Ovary (tissue), 10 donors: ENCODE measurements at regions of chr10 and their contacts with region 1.

Region 1: GRCh38 chr10:15097011-15097812 is at the start of gene RPP38:
- DNase-seq: peak; percentile 97 to 99 (median 99)
- H3K4me3 ChIP-seq: peak within 1 kb of the TSS; percentile 72
- H3K27ac ChIP-seq: peak within 1 kb of the TSS; percentile 88 to 94
- H3K4me1 ChIP-seq: peaks cover 9% of the 10 kb centered on the region
- H3K27me3 ChIP-seq: no peaks in the 10 kb centered on the region
- CTCF ChIP-seq: no peak
- EP300 ChIP-seq: no peak
- POLR2A ChIP-seq: peak; percentile 43
- total RNA-seq, gene RPP38: 9.1 to 19.2 (median 11.9) TPM

Region 2: GRCh38 chr10:14837757-14838581 is 259.2 kb before region 1 on chr10 and contains the starts of genes CDNF, HSPA14 and MSANTD7:
- intact Hi-C with region 1: loop called in 1 of 4 experiments (anchors 10 kb)
- DNase-seq: peak; percentile 99 to 100 (median 99)
- H3K4me3 ChIP-seq: peak within 1 kb of the TSS; percentile 98
- H3K27ac ChIP-seq: peak within 1 kb of the TSS; percentile 87 to 92
- H3K4me1 ChIP-seq: no peaks in the 10 kb centered on the region
- H3K27me3 ChIP-seq: no peaks in the 10 kb centered on the region
- CTCF ChIP-seq: no peak
- EP300 ChIP-seq: no peak
- POLR2A ChIP-seq: peak; percentile 76
- total RNA-seq, gene CDNF: 1.5 to 6.0 (median 4.4) TPM
- total RNA-seq, gene HSPA14: 7.7 to 13.6 (median 10.6) TPM
- total RNA-seq, gene MSANTD7: 9.2 to 15.1 (median 9.9) TPM

Region 3: GRCh38 chr10:14904316-14904732 is 192.9 kb before region 1 on chr10:
- intact Hi-C with region 1: no loop called
- DNase-seq: no peak
- H3K4me3 ChIP-seq: no peak overlapping the region
- H3K27ac ChIP-seq: no peak overlapping the region
- H3K4me1 ChIP-seq: no peaks in the 10 kb centered on the region
- H3K27me3 ChIP-seq: no peaks in the 10 kb centered on the region
- CTCF ChIP-seq: peak in 1 of 3 donors; percentile 17
- EP300 ChIP-seq: no peak
- POLR2A ChIP-seq: no peak

Region 4: GRCh38 chr10:14959276-14960057 is 137.7 kb before region 1 on chr10 and contains the start of gene MEIG1:
- intact Hi-C with region 1: loop called in 1 of 4 experiments (anchors 10 kb)
- DNase-seq: peak; percentile 94 to 99 (median 95)
- H3K4me3 ChIP-seq: peak within 1 kb of the TSS; percentile 78
- H3K27ac ChIP-seq: peak within 1 kb of the TSS; percentile 62 to 89
- H3K4me1 ChIP-seq: no peaks in the 10 kb centered on the region
- H3K27me3 ChIP-seq: no peaks in the 10 kb centered on the region
- CTCF ChIP-seq: no peak
- EP300 ChIP-seq: no peak
- POLR2A ChIP-seq: peak; percentile 57
- total RNA-seq, gene MEIG1: 0.69 TPM in 1 of 7 donors, not detected in the others

Region 5: GRCh38 chr10:15168781-15169554 is 71.8 kb after region 1 on chr10:
- intact Hi-C with region 1: loop called in 1 of 4 experiments (anchors 10 kb)
- DNase-seq: peak; percentile 96 to 99 (median 97)
- H3K4me3 ChIP-seq: peak overlapping the region; percentile 5
- H3K27ac ChIP-seq: no peak overlapping the region
- H3K4me1 ChIP-seq: peaks cover 4% of the 10 kb centered on the region
- H3K27me3 ChIP-seq: no peaks in the 10 kb centered on the region
- CTCF ChIP-seq: no peak
- EP300 ChIP-seq: no peak
- POLR2A ChIP-seq: no peak

Region 6: DNA sequence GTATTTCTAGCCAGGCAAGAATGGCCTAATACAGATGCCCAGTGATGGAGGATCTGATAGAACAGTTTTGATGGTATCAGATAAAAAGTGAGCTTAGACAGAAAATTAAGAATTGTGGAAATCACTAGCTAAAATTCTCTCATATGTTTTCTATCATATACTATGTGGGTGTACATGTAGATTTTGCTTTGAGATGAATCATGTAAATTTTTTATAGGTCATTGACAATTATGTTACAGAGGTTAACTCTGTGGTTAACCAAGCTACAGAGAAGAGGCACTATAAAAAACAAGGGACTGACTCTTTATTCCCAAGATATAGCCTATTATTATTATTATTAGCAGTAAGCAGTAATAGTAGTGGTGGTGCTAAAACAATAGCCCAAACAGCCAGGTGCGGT is 466.0 kb after region 1 on chr10:
- intact Hi-C with region 1: no loop called
- DNase-seq: no peak
- H3K4me3 ChIP-seq: no peak overlapping the region
- H3K27ac ChIP-seq: no peak overlapping the region
- H3K4me1 ChIP-seq: no peaks in the 10 kb centered on the region
- H3K27me3 ChIP-seq: no peaks in the 10 kb centered on the region
- CTCF ChIP-seq: no peak
- EP300 ChIP-seq: no peak
- POLR2A ChIP-seq: no peak